Esophagus muscularis mucosa (tissue), 4 donors: ENCODE measurements at regions of chr9 and their contacts with region 1.

Region 1: DNA sequence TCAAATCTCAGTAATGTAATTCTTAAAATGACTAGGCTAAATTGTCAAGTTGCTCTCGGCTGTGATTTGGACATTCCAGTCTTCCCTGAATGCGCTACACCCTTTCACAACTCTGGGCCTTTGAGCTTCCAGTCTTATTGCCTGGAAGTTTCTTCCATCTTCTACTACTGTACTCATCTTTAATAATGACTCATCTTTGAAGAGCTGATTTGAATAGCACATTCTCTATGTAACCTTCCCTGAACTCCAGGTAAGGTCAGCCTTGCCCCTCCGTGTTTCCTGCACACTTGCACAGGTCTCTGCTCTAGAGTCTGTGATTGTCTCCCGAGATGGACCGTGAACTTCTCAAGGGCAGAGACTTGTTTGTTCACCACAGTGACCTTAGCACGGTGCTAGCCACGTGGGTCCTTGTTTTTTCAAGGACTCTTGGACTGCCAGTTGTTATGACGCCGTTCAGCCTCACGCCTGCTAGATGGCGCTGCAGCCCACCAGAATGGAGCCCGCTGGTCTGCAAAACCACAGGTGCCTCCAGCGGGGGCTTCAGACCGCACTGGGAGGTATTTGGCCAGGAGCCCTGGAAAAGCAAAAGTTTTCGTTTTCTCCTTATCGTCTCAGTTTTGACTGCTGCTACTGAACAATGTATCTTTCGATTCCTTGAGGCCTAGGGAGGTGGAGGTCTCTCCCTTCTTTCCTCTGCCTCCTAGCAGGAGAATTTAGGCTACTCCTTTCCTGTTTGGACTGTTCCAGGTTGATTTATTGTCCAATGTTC is 44.4 kb downstream of the SEC61B start:
- DNase-seq: peak; percentile 90
- H3K4me3 ChIP-seq: peak overlapping the region in 3 of 4 donors; percentile 1 to 10 (median 3)
- H3K27ac ChIP-seq: no peak overlapping the region
- H3K4me1 ChIP-seq: peaks cover 0 to 11% (median 7%) of the 10 kb centered on the region in 4 donors
- H3K27me3 ChIP-seq: no peaks in the 10 kb centered on the region
- CTCF ChIP-seq: peak; percentile 73 to 86 (median 83)
- EP300 ChIP-seq: no peak
- POLR2A ChIP-seq: no peak

Region 2: DNA sequence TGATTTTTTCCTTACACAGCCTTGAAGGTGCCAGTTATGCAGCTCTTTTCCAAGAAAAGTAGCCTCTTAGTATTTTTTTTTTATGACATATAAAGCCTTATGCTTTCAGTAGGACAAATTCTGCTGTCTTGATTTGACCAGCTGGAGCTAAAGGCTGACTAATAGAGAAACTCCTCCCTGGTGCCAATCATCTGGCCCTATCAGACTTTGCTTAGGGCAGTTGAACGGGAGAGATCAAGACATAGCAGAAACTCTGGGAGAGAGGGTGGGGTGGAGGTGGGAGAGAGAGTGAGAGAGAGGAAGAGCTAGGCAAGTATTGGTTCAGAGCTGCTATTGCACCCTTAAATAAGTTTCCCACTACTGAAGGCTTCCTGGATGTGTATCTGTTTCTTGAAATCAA is 55.9 kb after region 1 on chr9:
- intact Hi-C with region 1: no loop called
- DNase-seq: peak; percentile 55
- H3K4me3 ChIP-seq: no peak overlapping the region
- H3K27ac ChIP-seq: no peak overlapping the region
- H3K4me1 ChIP-seq: no peaks in the 10 kb centered on the region
- H3K27me3 ChIP-seq: peaks cover 0 to 11% (median 0%) of the 10 kb centered on the region in 4 donors
- CTCF ChIP-seq: no peak
- EP300 ChIP-seq: no peak
- POLR2A ChIP-seq: no peak

Region 3: DNA sequence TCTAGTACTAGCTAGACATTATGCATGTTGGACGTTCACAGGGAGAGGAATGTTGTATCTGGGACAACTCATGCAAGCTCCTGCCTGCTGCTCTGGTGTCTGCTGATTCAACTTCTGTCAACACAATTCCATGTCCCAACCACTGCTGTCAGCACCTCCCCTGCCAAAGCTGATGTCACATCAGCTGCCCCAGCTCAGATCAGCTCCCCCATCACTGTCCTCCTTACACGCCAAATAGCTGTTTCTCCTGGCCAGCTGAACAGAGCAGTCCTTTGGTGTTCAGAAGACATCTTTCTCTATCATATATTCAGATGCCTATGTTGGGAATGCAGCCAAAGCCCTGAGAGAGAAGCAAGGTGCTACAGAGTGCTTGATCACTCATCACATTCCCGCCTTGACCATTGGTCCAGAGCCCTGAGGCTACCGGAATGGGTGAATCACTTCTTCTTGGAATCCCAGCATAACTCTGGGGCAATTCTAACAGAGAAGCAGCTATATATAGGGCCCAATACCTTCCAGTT is 179.0 kb after region 1 on chr9:
- intact Hi-C with region 1: loop called (anchors 10 kb)
- DNase-seq: peak; percentile 90
- H3K4me3 ChIP-seq: no peak overlapping the region
- H3K27ac ChIP-seq: peak overlapping the region in 2 of 4 donors; percentile 6 to 36
- H3K4me1 ChIP-seq: peaks cover 6 to 18% (median 15%) of the 10 kb centered on the region in 4 donors
- H3K27me3 ChIP-seq: no peaks in the 10 kb centered on the region
- CTCF ChIP-seq: no peak
- EP300 ChIP-seq: no peak
- POLR2A ChIP-seq: no peak

Region 4: DNA sequence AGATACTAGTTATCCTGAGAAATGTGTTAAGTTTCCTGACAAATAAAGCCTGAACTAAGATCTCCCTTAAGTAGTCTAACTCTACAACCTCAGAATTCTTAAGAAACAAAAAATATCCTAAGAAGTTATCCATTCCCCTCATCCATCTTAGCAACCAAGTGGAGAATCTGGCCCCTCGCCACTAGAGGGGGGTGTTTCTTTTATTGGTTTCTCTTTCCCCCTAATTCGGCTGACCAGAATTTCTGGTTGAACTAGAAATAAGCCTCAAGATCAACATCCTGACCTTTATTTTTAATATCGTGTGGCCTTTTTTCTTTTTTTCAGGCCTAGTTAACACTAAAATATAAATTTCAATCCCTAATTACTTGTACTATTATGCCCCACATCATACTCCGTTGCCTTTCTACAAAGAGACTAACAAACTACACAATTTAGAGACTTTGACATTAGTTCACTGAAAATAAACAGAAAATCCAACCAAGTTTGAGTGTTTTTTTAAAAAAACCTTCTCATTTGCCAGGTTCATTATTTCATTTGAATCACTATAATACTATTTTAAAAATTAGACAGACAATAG is 540.9 kb after region 1 on chr9:
- intact Hi-C with region 1: loop called (anchors 10 kb)
- DNase-seq: peak; percentile 94
- H3K4me3 ChIP-seq: no peak overlapping the region
- H3K27ac ChIP-seq: no peak overlapping the region
- H3K4me1 ChIP-seq: peaks cover 0 to 5% (median 1%) of the 10 kb centered on the region in 4 donors
- H3K27me3 ChIP-seq: no peaks in the 10 kb centered on the region
- CTCF ChIP-seq: peak; percentile 74 to 77 (median 75)
- EP300 ChIP-seq: no peak
- POLR2A ChIP-seq: no peak

Region 5: DNA sequence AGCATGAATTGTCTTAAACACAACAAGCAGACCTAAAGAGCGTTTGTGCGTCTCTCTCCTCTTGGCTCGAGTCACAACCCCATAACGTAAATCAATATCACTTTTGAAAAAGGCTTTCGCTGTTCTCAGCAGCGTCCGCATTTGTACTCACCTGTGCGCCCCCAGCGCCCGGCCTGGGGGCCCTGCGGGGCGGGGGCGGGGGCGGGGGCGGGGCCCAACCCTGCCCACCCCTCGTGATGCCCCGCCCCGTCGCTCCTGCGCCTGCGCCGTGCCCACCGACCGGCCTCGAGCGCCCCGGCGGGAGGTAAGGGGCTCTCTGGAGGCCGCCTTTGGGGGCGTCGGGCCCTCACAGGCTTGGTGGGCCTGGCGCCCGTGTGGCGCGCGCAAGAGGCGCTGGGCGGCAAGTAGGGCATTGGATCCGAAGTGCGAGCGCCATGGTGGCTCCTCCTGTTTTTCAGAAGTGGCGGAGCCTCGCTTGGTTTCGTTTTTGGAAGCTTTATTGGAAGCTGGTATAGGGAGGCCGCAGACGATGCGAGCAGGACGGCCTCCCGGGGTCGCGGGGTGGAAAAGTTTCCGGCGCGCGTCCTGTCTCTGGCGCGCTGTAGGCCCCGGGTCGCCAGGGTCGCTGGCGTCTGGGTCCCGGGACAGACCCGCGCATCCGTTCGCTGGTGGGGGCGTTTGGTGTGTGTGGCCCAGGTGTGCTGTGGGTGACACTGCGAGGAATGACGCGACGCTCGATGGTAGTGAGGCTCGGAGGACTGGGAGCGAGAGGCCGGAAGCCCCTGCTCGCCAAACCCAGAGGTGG is 640.2 kb after region 1 on chr9 and contains the start of gene STX17:
- intact Hi-C with region 1: loop called (anchors 10 kb)
- DNase-seq: peak; percentile 95
- H3K4me3 ChIP-seq: peak within 1 kb of the TSS; percentile 70 to 93 (median 85)
- H3K27ac ChIP-seq: peak within 1 kb of the TSS; percentile 93 to 98 (median 97)
- H3K4me1 ChIP-seq: peaks cover 8 to 28% (median 24%) of the 10 kb centered on the region in 4 donors
- H3K27me3 ChIP-seq: no peaks in the 10 kb centered on the region
- CTCF ChIP-seq: no peak
- EP300 ChIP-seq: no peak
- POLR2A ChIP-seq: peak; percentile 82
- total RNA-seq, gene STX17: 29.3 to 46.7 (median 38.4) TPM